Left colon (tissue), 2 donors: ENCODE measurements at regions of chr12 and their contacts with region 1.

Region 1: GRCh38 chr12:122471324-122472226 is 29.2 kb downstream of the ZCCHC8 start:
- DNase-seq: no peak
- ATAC-seq: peak; percentile 79

Region 2: DNA sequence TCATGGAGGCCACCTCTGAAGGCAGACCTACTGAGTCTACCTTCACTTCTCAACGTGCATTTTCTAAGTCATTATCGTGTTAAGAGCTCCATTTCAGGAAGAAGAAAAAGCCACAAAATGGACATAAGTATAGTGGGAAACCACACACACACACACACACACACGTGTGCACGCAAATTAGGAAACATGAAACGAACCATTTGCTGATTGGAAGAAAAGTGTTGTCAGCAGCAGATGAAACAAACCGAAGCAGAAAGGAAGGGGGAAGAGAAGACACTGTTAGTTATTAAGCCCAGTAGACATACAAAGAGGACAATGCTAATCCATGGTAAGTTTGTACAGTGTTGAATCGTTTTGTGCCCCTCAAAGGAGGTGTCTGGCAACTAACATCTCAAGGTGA is 195.3 kb before region 1 on chr12:
- intact Hi-C with region 1: no loop called
- DNase-seq: no peak
- ATAC-seq: no peak

Region 3: DNA sequence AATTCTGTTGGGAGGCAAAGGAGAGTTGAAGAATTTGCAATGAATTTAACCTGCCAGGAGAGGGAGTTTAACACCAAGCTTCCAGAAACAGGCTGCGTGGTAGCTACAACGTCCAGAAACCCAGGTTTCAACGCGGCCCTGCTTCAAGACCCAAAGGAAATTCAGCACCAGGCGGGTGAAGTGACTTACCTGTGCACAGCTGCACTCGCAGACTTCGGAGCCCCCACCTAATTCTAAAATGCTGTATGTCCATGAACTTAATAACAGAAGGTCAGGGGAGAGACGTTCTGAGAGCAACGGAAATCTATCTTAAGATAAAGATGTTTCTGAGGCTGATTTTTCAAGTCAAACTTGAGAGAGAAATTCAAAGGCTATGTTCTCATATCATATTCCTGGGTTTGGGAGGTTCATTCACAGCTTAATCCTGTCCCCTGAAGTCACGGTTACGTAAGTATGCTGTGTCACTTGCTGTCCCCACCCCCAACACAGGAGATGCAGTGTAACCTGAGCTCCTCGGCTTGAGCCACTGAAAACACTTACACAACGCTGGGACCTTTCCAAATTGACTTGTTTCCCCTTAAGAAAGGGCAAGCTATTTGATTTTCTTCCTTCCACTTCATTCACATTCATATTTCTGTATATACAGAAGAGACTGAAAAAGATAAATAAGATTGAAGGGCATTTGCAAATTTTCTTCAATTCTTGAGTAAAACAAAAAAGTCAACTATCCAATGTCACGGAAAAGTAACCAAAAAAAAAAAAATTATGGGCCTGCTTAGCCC is 71.8 kb before region 1 on chr12:
- intact Hi-C with region 1: loop called (anchors 5 to 10 kb)
- DNase-seq: peak; percentile 57 to 60
- ATAC-seq: peak; percentile 80

Region 4: GRCh38 chr12:122526683-122527477 is 55.3 kb after region 1 on chr12 and contains the starts of genes KNTC1 and RSRC2:
- intact Hi-C with region 1: no loop called
- DNase-seq: peak; percentile 98 to 99
- ATAC-seq: peak; percentile 89
- total RNA-seq, gene KNTC1: 10.1 to 17.5 TPM
- total RNA-seq, gene RSRC2: 49.4 to 67.4 TPM

Region 5: DNA sequence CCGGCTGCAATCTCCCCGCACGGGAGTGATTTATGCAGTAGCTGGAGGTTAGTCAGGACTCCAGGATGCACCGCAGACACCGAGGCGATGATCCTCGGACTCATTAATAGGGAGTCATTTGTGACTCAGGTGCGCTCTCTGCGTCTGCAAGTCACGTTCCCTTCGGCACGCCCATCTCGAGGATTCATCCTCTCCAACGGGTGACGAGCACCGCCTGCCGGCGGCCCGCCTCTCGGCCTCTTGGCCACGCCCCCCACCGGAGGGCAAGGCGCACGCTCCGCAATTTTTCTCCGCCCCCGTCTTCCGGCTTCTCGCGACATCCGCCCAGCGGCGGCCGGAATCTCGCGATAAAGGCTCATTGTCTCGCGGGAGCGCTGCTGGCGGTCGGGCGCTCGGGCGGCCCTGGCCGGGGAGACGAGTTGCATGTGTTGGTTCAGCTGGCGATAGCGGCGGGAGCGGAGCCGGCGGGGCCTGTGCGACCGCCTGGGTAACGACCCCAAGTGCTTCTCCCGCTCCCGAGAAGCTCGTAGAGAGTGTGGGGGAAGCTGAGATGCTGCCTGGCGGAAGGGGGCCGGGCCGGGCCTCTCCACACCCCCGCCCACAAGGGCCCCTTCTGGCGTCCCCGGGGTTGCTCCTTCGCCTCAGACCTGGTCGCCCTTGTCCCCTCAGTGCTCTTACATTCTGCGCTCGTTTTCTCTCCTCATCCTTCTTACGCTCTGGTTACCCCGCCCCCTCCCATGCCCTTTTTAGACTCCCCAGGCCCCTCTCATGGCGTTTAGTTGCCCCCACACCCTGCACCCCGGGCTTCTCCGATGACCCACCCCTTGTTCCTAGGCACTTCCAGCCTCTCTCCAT is 281.1 kb after region 1 on chr12 and contains the start of gene DENR:
- intact Hi-C with region 1: no loop called
- DNase-seq: peak; percentile 98 to 99
- ATAC-seq: peak; percentile 97
- total RNA-seq, gene DENR: 31.9 to 36.9 TPM